ENCODE measurements at regions of chr2 and their contacts with region 1.

Region 1: DNA sequence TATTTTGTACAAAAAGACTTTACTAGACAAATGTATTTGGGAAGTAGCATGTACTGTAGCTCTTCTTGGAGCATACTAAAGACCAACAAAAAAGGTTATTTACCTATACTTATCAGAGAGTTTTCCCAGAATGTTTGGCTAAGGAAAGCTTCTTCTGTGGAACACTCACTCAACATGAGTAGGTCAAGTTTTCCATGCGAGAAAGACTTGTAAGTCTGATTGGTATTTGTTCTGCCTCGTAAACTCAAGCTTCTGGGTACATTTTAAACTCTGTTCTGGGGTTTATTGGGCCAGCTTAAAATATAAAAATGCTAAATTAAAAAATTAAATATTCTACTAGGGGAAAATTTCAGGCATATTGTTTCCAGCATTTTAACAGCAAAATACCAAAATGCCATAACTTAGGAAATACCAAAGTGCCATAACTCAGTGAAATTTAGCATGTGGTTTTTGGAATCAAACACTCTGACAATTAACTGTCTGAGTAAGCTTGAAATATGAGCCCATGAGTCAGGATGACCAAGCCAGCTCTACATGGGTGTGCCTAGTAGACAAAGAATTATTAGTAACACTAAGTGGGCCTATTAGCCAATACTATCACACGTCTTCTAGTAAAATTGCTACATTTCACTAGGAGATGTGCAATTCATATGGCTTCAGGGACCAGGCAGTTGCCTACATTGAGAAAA is 47.3 kb upstream of the SERPINE2 start:
- DNase-seq: peak in 1 of 5 donors; percentile 37
- H3K4me3 ChIP-seq: no peak overlapping the region
- H3K27ac ChIP-seq: no peak overlapping the region
- H3K4me1 ChIP-seq: no peaks in the 10 kb centered on the region
- H3K27me3 ChIP-seq: no peaks in the 10 kb centered on the region
- CTCF ChIP-seq: no peak
- EP300 ChIP-seq: no peak
- POLR2A ChIP-seq: no peak

Region 2: DNA sequence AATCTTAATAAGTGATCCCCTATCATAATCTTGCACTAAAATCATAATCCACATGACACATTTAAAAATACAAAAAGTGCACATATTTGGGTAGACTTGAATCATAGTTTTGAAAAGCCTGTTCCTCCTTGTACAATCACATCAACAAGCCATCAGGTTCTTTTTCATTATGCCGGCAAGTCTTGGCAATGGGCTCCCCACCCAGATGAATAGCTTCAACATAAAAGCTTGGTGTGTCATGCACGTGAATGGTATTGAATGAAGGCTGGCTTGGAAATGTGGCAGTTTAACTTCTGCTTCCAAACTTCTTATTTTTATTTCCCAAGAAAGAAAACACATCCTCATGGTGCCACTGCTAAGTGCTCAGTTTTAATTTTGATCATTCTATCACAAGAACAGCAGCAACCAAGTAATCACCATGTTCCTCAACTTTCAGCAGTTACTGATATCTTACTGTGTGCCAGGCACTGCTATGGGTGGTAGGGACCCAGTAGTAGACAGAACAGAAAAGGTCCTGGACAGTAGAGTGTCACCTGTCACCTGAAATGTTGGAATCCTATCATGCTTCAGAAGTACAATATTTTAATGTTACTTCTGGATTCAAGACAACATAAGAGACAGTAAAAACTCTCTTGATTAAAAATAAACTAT is 338.9 kb before region 1 on chr2:
- intact Hi-C with region 1: loop called in 1 of 4 experiments (anchors 5 kb)
- DNase-seq: no peak
- H3K4me3 ChIP-seq: no peak overlapping the region
- H3K27ac ChIP-seq: no peak overlapping the region
- H3K4me1 ChIP-seq: peaks cover 1% of the 10 kb centered on the region
- H3K27me3 ChIP-seq: no peaks in the 10 kb centered on the region
- CTCF ChIP-seq: no peak
- EP300 ChIP-seq: no peak
- POLR2A ChIP-seq: no peak

Region 3: DNA sequence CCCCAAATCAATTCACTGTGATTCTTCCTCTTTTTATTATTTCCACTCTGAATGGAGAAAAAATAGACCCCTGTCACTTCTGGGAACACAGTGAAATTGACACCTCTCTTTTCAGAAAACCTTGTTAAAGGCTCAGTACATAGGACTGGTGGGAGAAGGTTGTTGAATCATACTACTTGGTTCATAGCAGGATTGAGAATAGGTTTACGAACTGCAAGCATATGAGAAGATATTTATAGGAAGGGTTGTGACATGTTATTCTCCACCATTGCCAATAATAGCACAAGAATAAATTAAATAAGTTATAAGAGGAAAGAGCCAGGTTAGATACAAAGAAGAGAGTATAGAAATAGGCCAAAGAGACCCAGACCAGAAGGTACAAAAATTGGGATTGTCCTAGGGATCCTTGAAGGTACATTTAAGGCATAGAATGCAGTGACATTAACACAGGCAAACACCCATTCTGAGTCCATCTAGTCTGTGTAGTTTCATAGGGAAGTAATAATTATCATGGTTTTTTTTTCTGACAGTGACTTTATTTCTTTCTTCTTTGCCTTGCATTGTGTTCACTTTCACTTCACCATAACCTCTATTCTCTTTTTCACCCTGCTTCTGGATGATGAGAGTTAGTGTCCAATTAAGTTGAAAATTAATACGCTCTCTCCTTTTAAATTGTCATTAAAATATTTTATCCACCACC is 25.4 kb before region 1 on chr2:
- intact Hi-C with region 1: loop called in 1 of 4 experiments (anchors 1 kb)
- DNase-seq: no peak
- H3K4me3 ChIP-seq: no peak overlapping the region
- H3K27ac ChIP-seq: no peak overlapping the region
- H3K4me1 ChIP-seq: no peaks in the 10 kb centered on the region
- H3K27me3 ChIP-seq: no peaks in the 10 kb centered on the region
- CTCF ChIP-seq: no peak
- EP300 ChIP-seq: no peak
- POLR2A ChIP-seq: no peak

Region 4: GRCh38 chr2:224585205-224586088 is 499.1 kb after region 1 on chr2 and contains the start of gene CUL3:
- intact Hi-C with region 1: no loop called
- DNase-seq: peak; percentile 99 to 100 (median 100)
- H3K4me3 ChIP-seq: peak within 1 kb of the TSS; percentile 89
- H3K27ac ChIP-seq: peak within 1 kb of the TSS; percentile 71 to 80
- H3K4me1 ChIP-seq: peaks cover 14% of the 10 kb centered on the region
- H3K27me3 ChIP-seq: no peaks in the 10 kb centered on the region
- CTCF ChIP-seq: no peak
- EP300 ChIP-seq: no peak
- POLR2A ChIP-seq: peak; percentile 74
- total RNA-seq, gene CUL3: 57.0 to 83.3 (median 71.1) TPM